Activated B cell treated with CpG ODN at 0.5 μM for 24 hours (primary cell): ENCODE measurements at regions of chr1 and their contacts with region 1.

Region 1: GRCh38 chr1:110766025-110766647 is 91.4 kb upstream of the KCNA3 start:
- DNase-seq: no peak
- ATAC-seq: peak; percentile 62
- H3K4me3 Mint-ChIP-seq: no peak overlapping the region
- H3K27ac Mint-ChIP-seq: no peak overlapping the region
- H3K4me1 Mint-ChIP-seq: peaks cover 3% of the 10 kb centered on the region
- H3K27me3 Mint-ChIP-seq: peaks cover 10% of the 10 kb centered on the region
- CTCF ChIP-seq: no peak

Region 2: DNA sequence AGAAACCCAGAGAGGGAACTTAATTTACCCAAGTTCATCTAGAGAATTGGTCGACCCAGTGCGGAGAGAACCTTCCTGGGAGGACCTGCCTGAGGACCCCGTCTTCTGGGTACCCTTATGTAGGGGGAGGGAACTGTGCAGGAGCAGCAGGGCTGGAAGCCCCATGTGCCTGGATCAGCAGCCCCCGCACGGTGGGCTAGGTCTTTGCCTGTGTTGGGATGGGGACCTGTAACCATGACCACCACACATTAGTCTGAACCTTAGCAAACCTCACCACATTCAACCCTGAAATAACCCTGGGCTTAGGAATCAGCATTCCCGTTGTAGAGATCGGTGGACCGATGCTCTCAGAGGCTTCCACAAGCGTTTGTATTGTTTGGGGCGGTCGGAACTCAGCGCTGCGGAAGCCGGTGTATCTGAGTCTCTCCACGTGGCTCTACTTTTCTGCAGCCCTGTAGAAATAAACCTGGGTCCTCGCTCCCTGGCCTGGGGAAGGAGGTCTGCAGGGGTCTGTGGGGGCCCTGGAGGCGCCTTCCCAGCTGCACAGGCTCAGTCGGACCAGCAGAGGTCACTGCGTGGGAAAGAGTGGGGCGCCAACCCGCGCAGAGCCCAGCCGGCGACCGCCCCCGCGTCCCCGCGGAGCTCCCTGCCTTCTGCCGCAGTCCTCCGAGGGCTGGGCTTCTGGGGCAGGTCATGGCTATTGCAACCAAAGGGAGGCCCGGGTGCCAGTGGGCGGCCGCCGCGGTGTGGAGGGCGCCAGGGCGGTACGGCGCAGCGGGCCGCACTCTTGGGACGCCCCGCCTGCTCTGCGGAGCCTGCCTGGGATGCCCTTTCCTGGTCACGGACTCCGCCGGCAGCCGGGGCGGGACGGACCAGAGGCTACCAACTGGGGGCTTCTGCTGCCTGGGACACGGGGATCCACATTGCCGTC is 211.0 kb before region 1 on chr1:
- CTCF ChIA-PET with region 1: interaction called, 28 read pairs
- POLR2A ChIA-PET with region 1: no interaction called
- intact Hi-C with region 1: loop called (anchors 1 kb)
- DNase-seq: peak; percentile 50
- ATAC-seq: peak; percentile 96
- H3K4me3 Mint-ChIP-seq: peak overlapping the region; percentile 16
- H3K27ac Mint-ChIP-seq: no peak overlapping the region
- H3K4me1 Mint-ChIP-seq: peaks cover 3% of the 10 kb centered on the region
- H3K27me3 Mint-ChIP-seq: peaks cover 46% of the 10 kb centered on the region
- CTCF ChIP-seq: peak; percentile 33

Region 3: GRCh38 chr1:110570307-110570706 is 195.8 kb before region 1 on chr1:
- CTCF ChIA-PET with region 1: no interaction called
- POLR2A ChIA-PET with region 1: no interaction called
- intact Hi-C with region 1: no loop called
- DNase-seq: no peak
- ATAC-seq: no peak
- H3K4me3 Mint-ChIP-seq: no peak overlapping the region
- H3K27ac Mint-ChIP-seq: no peak overlapping the region
- H3K4me1 Mint-ChIP-seq: no peaks in the 10 kb centered on the region
- H3K27me3 Mint-ChIP-seq: peaks cover 35% of the 10 kb centered on the region
- CTCF ChIP-seq: no peak

Region 4: GRCh38 chr1:110645821-110646735 is 120.1 kb before region 1 on chr1:
- CTCF ChIA-PET with region 1: interaction called, 10 read pairs
- POLR2A ChIA-PET with region 1: no interaction called
- intact Hi-C with region 1: no loop called
- DNase-seq: no peak
- ATAC-seq: no peak
- H3K4me3 Mint-ChIP-seq: no peak overlapping the region
- H3K27ac Mint-ChIP-seq: no peak overlapping the region
- H3K4me1 Mint-ChIP-seq: peaks cover 15% of the 10 kb centered on the region
- H3K27me3 Mint-ChIP-seq: no peaks in the 10 kb centered on the region
- CTCF ChIP-seq: no peak

Region 5: GRCh38 chr1:110787328-110788071 is 21.4 kb after region 1 on chr1:
- CTCF ChIA-PET with region 1: interaction called, 55 read pairs
- POLR2A ChIA-PET with region 1: no interaction called
- intact Hi-C with region 1: no loop called
- DNase-seq: peak; percentile 49
- ATAC-seq: peak; percentile 85
- H3K4me3 Mint-ChIP-seq: peak overlapping the region; percentile 70
- H3K27ac Mint-ChIP-seq: peak overlapping the region; percentile 95
- H3K4me1 Mint-ChIP-seq: peaks cover 70% of the 10 kb centered on the region
- H3K27me3 Mint-ChIP-seq: no peaks in the 10 kb centered on the region
- CTCF ChIP-seq: no peak

Region 6: DNA sequence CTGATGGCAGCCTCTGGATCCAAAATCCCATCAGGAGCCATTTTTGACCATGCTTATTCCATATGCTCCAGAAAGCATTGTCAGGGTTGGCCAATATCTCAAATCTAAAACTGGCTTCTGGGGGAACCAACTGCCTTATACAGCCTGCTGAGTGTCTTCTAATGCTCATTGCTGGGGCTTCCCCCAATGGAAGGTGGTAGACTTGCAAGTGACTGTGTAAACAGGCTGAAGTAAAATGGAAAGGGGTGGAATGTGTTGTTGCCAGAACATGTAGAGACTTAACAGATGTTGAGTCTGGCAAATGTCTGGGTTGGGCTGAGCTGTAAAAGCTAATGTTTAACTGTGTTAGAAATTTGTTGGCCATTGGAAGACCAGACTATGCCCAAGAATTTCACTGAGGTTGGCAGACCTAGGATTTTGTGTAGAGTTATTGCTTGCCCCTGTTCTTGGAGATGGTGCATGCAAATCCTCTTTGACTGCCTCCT is 220.3 kb after region 1 on chr1:
- CTCF ChIA-PET with region 1: interaction called, 9 read pairs
- POLR2A ChIA-PET with region 1: no interaction called
- intact Hi-C with region 1: loop called (anchors 5 kb)
- DNase-seq: no peak
- ATAC-seq: no peak
- H3K4me3 Mint-ChIP-seq: no peak overlapping the region
- H3K27ac Mint-ChIP-seq: no peak overlapping the region
- H3K4me1 Mint-ChIP-seq: peaks cover 6% of the 10 kb centered on the region
- H3K27me3 Mint-ChIP-seq: peaks cover 11% of the 10 kb centered on the region
- CTCF ChIP-seq: no peak